Pancreas (tissue), 10 donors: ENCODE measurements at regions of chr12 and their contacts with region 1.

Region 1: DNA sequence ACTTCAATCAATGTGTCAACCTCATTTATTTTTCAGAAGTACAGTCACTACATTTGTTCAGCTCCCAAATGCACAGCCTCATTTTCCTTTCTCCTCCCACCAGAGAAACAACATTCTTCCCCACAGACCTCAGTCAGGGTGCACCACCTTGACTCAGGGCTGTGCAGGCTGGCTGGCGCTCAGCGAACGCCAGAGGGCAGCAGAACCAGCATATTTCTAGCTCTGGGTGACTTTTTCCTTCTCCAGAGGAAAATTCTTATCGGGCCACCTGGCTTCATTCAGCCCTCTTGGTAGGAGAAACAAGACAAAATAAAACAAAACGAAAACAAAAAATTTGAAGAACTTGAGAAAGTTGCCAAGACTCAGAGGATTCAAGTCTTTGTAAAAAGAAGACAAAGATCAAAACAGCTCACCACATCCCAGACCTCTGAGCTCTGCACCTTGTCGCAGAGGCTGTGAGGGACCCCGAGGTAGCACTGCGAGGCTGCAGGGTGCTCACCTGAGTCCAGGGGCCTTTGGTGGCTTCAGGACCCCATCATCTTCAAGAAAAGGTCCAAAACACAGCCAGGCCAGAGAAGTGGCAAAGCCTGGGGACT is 33.7 kb downstream of the PAH start:
- DNase-seq: peak; percentile 52 to 87 (median 74)
- ATAC-seq: peak; percentile 74 to 88 (median 86)
- H3K4me3 ChIP-seq: no peak overlapping the region
- H3K27ac ChIP-seq: no peak overlapping the region
- H3K4me1 ChIP-seq: peaks cover 0 to 11% (median 4%) of the 10 kb centered on the region in 3 donors
- H3K27me3 ChIP-seq: no peaks in the 10 kb centered on the region
- CTCF ChIP-seq: peak; percentile 81 to 86 (median 84)

Region 2: GRCh38 chr12:102298022-102298421 is 585.3 kb before region 1 on chr12:
- intact Hi-C with region 1: no loop called
- DNase-seq: no peak
- ATAC-seq: no peak
- H3K4me3 ChIP-seq: no peak overlapping the region
- H3K27ac ChIP-seq: no peak overlapping the region
- H3K4me1 ChIP-seq: no peaks in the 10 kb centered on the region
- H3K27me3 ChIP-seq: no peaks in the 10 kb centered on the region
- CTCF ChIP-seq: no peak

Region 3: DNA sequence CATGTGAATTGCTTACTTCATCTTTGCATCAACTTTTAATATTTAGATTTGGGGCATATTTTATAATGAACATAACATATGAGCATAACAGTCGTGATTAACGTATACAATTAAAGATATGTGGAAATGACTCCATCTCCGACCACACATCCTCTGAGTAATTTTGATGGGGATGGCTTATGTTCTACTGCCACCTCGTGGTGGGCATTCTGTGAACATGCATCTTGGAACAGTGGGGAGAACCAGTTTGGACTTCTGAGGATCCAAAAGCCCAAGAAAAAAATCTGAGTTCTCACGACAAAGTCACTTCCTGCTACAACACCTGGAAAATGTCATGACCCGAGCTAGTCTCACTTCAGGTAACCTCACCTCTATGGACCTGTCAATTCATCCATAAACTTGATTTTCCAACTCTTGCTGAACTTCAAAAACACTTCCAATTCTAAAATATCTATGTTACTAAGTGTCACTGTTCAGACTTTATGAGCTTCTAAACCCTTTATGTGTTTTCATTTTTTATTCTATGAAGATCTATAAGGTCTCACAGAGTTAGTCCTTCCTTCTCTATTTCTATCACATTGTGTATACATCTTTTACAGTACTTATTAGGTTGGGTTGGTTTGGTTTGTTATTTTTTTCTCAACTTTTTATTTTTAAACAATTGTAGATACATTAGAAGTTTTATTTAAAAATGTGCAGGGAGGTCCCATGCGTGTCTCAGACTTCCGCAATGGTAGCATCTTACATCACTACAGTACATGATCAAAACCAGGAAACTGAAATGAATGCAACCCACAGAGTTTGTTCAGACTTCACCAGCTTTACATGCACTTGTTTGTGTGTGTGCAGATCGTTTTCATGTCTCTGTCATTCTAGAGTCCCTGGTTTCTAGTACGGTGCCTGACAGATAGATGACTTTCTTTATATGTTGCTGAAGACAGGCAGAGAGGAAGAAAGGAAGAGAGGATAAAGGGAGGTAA is 665.6 kb after region 1 on chr12:
- intact Hi-C with region 1: loop called in 2 of 3 experiments (anchors 5 to 10 kb)
- DNase-seq: peak in 5 of 6 donors; percentile 24 to 74 (median 42)
- ATAC-seq: peak in 3 of 4 donors; percentile 82 to 85 (median 84)
- H3K4me3 ChIP-seq: no peak overlapping the region
- H3K27ac ChIP-seq: no peak overlapping the region
- H3K4me1 ChIP-seq: no peaks in the 10 kb centered on the region
- H3K27me3 ChIP-seq: no peaks in the 10 kb centered on the region
- CTCF ChIP-seq: peak; percentile 58 to 69 (median 62)

Region 4: GRCh38 chr12:103556890-103557627 is 673.8 kb after region 1 on chr12:
- intact Hi-C with region 1: loop called in 1 of 3 experiments (anchors 10 kb)
- DNase-seq: no peak
- ATAC-seq: peak in 2 of 4 donors; percentile 36 to 39
- H3K4me3 ChIP-seq: no peak overlapping the region
- H3K27ac ChIP-seq: no peak overlapping the region
- H3K4me1 ChIP-seq: no peaks in the 10 kb centered on the region
- H3K27me3 ChIP-seq: no peaks in the 10 kb centered on the region
- CTCF ChIP-seq: no peak